Astrocyte of the cerebellum (primary cell): ENCODE measurements at regions of chr3 and their contacts with region 1.

Region 1: GRCh38 chr3:46778101-46778500 is 60.4 kb upstream of the PRSS50 start:
- DNase-seq: no peak
- H3K4me3 ChIP-seq: no peak overlapping the region
- CTCF ChIP-seq: no peak

Region 2: GRCh38 chr3:46695177-46695961 is 82.7 kb before region 1 on chr3:
- in situ Hi-C with region 1: loop called (anchors 25 kb)
- DNase-seq: no peak
- H3K4me3 ChIP-seq: no peak overlapping the region
- CTCF ChIP-seq: peak; percentile 31

Region 3: GRCh38 chr3:46733026-46733800 is 44.9 kb before region 1 on chr3:
- in situ Hi-C with region 1: no loop called
- DNase-seq: no peak
- H3K4me3 ChIP-seq: no peak overlapping the region
- CTCF ChIP-seq: no peak